ENCODE measurements at regions of chr9 and their contacts with region 1.

Region 1: DNA sequence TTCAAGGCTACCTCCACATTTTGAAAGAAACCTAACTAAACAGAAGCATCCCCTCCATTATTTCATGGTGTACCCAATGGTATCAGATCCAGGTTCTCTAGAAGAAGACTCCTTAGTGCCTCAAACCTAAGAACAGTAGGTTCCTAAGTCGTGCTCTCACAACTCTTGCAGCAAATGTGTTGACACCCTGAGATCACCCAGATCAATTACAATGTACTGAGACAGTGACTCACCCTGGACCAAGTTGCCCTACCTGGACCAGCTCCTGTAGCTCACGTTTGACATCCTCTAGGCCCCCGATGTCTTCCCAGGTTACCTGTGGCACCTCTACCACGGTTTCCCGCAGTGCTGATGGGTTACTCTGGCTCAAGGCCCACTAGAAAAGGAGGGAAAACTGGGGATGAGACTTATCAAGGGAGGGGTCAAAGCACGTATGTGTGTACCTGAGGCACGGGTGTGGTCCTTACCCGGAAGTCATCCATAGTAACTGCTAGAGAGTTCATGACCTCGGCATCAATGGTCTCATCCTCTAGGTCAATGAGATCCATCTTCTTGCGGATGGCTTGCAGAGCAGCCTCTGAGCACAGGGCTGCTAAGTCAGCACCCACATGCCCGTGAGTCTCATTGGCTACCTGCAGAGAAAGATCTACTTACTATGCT is 11.7 kb downstream of the VCP start:
- DNase-seq: no peak
- ATAC-seq: no peak
- H3K4me3 ChIP-seq: no peak overlapping the region
- H3K4me3 Mint-ChIP-seq: no peak overlapping the region
- H3K27ac ChIP-seq: no peak overlapping the region
- H3K27ac Mint-ChIP-seq: no peak overlapping the region
- H3K4me1 ChIP-seq: no peaks in the 10 kb centered on the region
- H3K4me1 Mint-ChIP-seq: peaks cover 0 to 7% (median 0%) of the 10 kb centered on the region in 3 donors
- H3K27me3 ChIP-seq: no peaks in the 10 kb centered on the region
- H3K27me3 Mint-ChIP-seq: no peaks in the 10 kb centered on the region

Region 2: GRCh38 chr9:35172878-35173277 is 112.2 kb after region 1 on chr9:
- CTCF ChIA-PET with region 1: no interaction called
- POLR2A ChIA-PET with region 1: no interaction called
- DNase-seq: no peak
- ATAC-seq: no peak
- H3K4me3 ChIP-seq: no peak overlapping the region
- H3K4me3 Mint-ChIP-seq: no peak overlapping the region
- H3K27ac ChIP-seq: no peak overlapping the region
- H3K27ac Mint-ChIP-seq: no peak overlapping the region
- H3K4me1 ChIP-seq: peaks cover 0 to 2% of the 10 kb centered on the region in 2 experiments
- H3K4me1 Mint-ChIP-seq: no peaks in the 10 kb centered on the region
- H3K27me3 ChIP-seq: peaks cover 0 to 3% of the 10 kb centered on the region in 2 experiments
- H3K27me3 Mint-ChIP-seq: peaks cover 8 to 14% of the 10 kb centered on the region in 2 donors

Region 3: GRCh38 chr9:35470894-35471293 is 410.2 kb after region 1 on chr9:
- CTCF ChIA-PET with region 1: interaction called in 1 of 2 experiments, 12 read pairs
- POLR2A ChIA-PET with region 1: no interaction called
- DNase-seq: no peak
- ATAC-seq: no peak
- H3K4me3 ChIP-seq: no peak overlapping the region
- H3K4me3 Mint-ChIP-seq: no peak overlapping the region
- H3K27ac ChIP-seq: no peak overlapping the region
- H3K27ac Mint-ChIP-seq: no peak overlapping the region
- H3K4me1 ChIP-seq: no peaks in the 10 kb centered on the region
- H3K4me1 Mint-ChIP-seq: no peaks in the 10 kb centered on the region
- H3K27me3 ChIP-seq: no peaks in the 10 kb centered on the region
- H3K27me3 Mint-ChIP-seq: peaks cover 35 to 42% of the 10 kb centered on the region in 2 donors